Dorsolateral prefrontal cortex (tissue), 120 donors: ENCODE measurements at regions of chr1 and their contacts with region 1.

Region 1: GRCh38 chr1:230642263-230642959 is at the start of gene COG2:
- DNase-seq: peak; percentile 88 to 97 (median 94)
- H3K4me3 ChIP-seq: peak within 1 kb of the TSS; percentile 54 to 99 (median 88)
- H3K27ac ChIP-seq: peak within 1 kb of the TSS; percentile 31 to 96 (median 89)
- H3K27me3 ChIP-seq: no peaks in the 10 kb centered on the region
- CTCF ChIP-seq: peak; percentile 99 to 100 (median 100)
- total RNA-seq, gene COG2: 23.2 to 41.1 (median 30.6) TPM

Region 2: GRCh38 chr1:230359992-230360668 is 282.3 kb before region 1 on chr1:
- intact Hi-C with region 1: loop called in 1 of 2 experiments (anchors 10 kb)
- DNase-seq: no peak
- H3K4me3 ChIP-seq: no peak overlapping the region
- H3K27ac ChIP-seq: peak overlapping the region in 11 of 59 donors; percentile 9 to 46 (median 32)
- H3K27me3 ChIP-seq: no peaks in the 10 kb centered on the region
- CTCF ChIP-seq: no peak

Region 3: DNA sequence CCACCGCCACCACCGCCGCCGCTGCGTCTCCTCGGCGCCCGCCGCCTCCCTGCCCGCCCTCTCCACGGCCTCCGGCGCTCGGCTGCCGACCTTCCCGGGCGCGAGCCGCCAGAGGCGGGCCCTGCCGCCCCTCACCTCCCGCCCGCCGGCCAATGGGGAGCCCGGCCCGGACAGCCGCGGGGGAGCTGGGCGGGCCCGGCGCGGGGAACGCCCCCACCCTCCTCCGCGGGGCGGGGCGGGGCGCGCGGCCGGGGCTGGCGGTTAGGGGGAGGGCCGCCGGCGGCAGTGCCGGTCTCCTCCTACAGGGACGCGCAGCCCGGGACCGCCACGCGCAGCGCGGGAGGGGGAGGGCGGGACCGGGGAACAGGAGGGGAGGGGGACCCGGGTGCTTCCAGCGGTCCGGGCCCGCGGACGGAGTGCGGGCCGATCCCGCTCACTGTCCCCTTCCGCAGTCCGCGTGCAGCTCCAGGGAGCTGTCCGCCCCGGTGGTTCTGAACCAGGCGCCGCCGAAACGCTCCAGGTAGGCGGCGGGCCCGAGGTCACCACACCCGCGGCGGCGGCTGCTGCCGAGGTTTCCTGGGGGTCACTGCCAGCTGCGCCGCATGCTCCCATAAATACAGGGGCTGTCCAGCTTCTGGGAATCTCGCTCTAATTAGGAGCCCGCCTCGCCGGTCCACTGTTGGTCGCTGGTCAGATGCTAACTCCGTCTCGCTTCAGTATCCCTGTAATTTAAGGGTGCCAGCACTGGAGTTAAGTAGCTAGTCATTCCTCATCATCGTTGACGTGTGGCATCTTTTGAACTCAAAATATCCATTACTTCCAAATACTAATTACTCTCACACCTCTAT is 215.9 kb before region 1 on chr1 and contains the start of gene PGBD5:
- intact Hi-C with region 1: loop called (anchors 5 kb)
- DNase-seq: peak; percentile 65 to 94 (median 82)
- H3K4me3 ChIP-seq: peak within 1 kb of the TSS; percentile 54 to 88 (median 73)
- H3K27ac ChIP-seq: peak within 1 kb of the TSS; percentile 3 to 91 (median 81)
- H3K27me3 ChIP-seq: no peaks in the 10 kb centered on the region
- CTCF ChIP-seq: peak in 29 of 56 donors; percentile 11 to 43 (median 30)
- total RNA-seq, gene PGBD5: 42.3 to 119 (median 92.1) TPM

Region 4: DNA sequence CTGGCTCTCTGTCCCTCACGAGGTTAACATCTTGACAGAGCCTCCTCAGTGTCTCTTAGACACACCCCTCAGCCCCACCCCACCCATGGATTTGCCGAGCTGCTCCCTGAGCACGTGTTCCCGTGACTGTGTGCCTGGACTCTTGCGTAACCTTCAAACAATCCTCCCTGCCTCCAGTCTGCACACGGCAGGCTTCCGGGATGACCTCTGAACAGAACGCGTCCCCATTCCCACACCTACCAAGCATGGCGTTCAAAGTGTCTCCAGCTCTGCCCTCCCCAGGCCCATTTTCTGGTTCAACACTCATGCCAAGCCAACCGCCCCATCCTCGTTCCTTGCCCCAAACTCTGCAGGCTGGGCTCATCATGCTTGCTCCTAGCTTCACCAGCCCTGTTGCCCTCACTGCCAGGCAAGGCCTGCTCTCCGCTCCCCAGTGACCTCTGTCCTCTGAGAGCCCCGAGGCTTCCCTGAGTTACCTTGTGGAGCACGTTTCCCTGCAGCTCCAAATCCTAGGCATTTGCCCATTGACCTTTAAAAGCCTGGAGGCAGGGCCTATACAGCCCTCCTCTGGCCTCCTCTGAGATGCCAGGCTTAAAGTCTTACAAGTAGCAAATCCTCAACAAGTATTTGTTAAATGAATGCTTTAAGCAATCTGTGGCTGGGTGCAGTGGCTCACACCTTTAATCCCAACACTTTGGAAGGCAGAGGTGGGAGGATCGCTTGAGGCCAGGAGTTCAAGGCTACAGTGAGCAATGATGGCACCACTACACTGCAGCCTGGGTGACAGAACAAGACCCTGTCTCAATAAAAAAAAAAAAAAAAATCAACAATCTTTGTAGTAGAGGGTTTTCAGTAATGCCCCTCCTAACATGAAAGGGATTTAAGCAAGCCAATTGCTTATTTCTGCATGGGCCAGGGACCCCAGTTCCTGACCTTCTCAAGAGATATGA is 66.5 kb after region 1 on chr1:
- intact Hi-C with region 1: loop called in 1 of 2 experiments (anchors 5 kb)
- DNase-seq: no peak
- H3K4me3 ChIP-seq: peak overlapping the region in 46 of 59 donors; percentile 7 to 69 (median 28)
- H3K27ac ChIP-seq: peak overlapping the region in 16 of 59 donors; percentile 1 to 63 (median 39)
- H3K27me3 ChIP-seq: no peaks in the 10 kb centered on the region
- CTCF ChIP-seq: no peak

Region 5: DNA sequence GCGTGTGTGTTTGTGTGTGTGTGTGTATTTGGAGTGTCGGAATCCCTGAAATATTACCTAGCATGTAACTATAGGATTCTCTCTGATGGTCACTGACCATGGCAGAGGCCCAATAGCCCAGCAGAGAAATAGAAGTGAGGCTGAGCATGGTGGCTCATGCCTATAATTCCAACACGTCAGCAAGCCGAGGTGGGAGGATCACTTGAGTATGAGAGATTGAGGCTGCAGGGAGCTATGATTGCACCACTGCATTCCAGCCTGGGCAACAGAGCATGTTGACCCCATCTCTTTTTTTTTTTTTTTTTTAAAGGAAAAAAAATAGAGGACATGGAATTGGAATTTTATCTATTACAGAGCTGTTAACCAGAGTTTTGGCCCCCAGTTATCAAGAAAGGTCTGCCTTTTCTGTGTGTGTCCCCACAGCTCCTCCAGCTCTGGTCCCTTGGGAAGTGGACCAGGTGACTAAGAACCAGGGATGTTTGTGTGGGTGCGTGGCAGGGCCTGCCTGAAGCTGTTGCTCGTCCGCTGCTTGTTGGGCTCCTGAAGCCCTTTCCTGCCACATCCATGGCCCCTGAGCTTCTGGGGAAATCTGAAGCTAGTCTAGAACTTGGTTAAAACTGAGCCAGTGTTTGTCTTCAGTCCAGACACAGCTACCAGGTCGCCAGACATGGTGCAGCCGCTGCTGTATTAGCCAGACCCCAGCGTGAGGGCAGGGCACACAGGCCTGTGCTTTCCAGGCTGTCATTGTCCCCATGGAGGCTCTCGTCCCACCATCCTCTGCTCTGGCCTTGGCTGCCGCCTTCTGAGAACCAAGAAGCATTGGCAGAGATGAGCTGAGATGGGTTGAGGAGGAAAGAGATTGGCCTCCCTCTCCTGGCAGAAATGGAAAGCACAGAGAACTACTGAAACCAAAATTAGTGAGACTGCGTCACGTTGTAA is 130.3 kb after region 1 on chr1:
- intact Hi-C with region 1: loop called (anchors 1 kb)
- DNase-seq: peak; percentile 59 to 85 (median 79)
- H3K4me3 ChIP-seq: peak overlapping the region in 53 of 59 donors; percentile 4 to 66 (median 41)
- H3K27ac ChIP-seq: peak overlapping the region in 54 of 59 donors; percentile 1 to 84 (median 63)
- H3K27me3 ChIP-seq: no peaks in the 10 kb centered on the region
- CTCF ChIP-seq: peak; percentile 40 to 94 (median 86)

Region 6: GRCh38 chr1:230917284-230918135 is 275.1 kb after region 1 on chr1:
- intact Hi-C with region 1: loop called in 1 of 2 experiments (anchors 5 kb)
- DNase-seq: peak; percentile 66 to 92 (median 73)
- H3K4me3 ChIP-seq: peak overlapping the region in 1 of 59 donors; percentile 11
- H3K27ac ChIP-seq: peak overlapping the region in 55 of 59 donors; percentile 2 to 85 (median 70)
- H3K27me3 ChIP-seq: no peaks in the 10 kb centered on the region
- CTCF ChIP-seq: peak; percentile 35 to 86 (median 62)